ENCODE measurements at regions of chr17 and their contacts with region 1.

Region 1: GRCh38 chr17:57662644-57663308 is 82.3 kb downstream of the CCDC182 start:
- DNase-seq: peak; percentile 97

Region 2: DNA sequence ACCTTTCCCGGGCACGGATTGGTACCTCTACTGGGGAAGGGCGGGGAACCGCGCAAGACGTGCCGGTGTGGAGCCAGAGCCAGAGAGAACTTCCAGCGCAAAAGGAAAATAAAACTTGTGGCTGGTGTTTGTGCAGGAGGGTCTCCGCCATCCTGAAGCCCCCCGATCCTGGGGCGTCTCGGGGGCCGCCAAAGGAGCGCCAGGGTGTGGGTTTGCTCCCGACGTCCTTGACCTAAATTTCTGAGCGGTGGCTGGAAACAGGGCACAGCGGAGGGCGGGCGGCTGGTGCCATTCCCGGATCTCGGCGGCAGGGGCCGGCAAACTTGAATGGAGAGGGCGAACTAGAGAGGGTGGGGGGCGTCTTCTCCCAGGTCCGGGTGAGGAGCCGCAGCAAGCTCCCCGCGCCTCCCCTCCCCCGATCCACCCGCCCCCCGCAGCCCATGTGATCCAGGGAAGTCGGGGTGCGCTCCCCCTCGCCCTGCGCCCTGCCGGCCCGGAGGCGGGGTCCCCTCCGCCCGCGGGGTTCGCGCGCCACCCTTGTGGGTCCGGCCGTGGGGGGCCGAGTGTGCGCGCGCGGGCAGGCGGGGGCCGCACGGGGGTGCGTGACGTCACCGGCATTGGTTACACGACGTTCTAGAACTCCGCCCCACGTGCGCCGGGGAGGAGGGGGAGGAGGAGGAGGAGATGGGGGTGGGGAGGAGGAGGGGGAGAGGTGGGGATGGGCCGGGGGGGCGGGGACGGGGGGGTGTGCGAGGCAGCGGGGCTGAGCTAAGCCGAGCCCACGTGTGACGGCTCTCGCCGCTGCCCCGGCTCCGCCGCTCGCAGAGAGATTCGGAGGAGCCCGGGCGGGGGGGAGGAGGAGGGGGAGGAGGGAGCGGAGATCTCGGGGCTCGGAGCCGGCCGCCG is 406.7 kb before region 1 on chr17 and contains the start of gene MSI2:
- intact Hi-C with region 1: loop called (anchors 5 kb)
- DNase-seq: peak; percentile 94
- total RNA-seq, gene MSI2: 112 TPM

Region 3: DNA sequence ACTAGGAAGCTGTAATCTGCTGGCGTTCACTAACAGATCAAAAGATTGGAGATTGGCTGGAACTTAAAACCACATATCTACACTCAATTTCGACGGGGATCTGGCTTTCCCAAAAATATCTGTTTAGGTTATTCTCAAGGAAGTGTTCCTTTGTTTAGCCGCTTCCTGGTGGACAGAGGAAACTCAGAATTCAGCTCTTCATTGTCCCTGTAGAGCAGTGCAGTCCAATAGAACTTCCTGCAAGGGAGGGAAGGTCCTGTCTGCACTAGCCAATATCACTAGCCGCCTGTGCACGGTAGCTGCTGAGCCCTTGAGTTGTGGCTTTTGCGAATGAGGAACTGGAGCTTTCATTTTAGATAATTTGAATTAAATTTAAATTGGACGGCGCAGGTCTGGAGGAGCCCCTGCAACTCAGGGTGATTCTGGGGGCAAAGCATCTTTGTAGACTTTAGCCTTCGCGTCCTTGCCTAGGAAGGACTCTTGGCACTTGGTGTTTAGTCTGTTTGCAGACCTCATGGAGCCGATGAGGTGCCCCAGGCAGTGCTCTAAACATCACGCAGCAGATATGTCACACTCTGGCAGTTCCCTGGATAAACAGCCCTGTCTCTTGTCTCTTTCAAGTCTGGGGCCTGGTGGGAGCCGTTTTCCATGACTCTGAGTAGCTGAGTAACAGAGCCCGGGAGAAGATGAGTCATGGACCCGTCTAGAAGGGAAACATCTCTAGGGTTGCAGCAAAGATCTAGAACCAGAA is 39.9 kb before region 1 on chr17:
- intact Hi-C with region 1: loop called (anchors 2 kb)
- DNase-seq: no peak

Region 4: DNA sequence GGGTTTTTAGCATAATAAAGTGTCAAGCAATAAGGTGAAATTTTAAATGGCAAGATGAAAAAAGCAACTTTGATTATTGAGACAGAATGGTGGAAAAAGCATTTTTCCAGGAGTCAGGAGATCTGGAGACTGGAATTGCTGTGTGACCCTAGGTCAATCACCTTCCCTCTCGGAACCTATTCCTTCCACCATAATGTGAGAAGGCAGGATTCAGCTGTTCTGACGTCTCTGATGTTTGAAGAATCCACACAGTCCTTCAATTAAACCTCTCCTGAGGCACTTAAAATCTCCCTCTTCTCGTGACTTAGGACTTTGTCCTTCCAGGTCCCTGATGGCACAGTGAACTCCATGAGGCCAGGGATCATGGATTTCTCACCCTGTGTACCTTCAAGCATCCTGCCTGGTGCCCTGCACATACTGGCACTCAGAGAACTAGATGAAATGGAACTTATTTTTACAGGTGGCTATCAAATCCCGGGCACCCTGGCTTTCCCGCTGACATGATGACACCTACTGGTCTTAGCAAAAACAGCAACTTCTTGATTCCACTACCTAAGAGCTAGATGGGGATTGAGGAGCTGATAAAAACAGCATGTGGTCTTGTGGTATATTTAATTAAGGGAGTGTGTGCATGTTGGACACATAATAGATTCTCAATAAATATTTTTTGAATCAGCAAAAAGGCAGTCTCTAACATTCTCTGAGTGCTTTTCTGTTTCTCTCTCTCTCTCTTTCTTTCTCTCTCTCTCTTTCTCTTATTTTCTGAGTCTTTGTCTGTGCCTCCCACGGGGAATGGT is 84.6 kb after region 1 on chr17:
- intact Hi-C with region 1: no loop called
- DNase-seq: no peak

Region 5: GRCh38 chr17:57833179-57833939 is 170.6 kb after region 1 on chr17:
- intact Hi-C with region 1: loop called (anchors 5 kb)
- DNase-seq: peak; percentile 78

Region 6: DNA sequence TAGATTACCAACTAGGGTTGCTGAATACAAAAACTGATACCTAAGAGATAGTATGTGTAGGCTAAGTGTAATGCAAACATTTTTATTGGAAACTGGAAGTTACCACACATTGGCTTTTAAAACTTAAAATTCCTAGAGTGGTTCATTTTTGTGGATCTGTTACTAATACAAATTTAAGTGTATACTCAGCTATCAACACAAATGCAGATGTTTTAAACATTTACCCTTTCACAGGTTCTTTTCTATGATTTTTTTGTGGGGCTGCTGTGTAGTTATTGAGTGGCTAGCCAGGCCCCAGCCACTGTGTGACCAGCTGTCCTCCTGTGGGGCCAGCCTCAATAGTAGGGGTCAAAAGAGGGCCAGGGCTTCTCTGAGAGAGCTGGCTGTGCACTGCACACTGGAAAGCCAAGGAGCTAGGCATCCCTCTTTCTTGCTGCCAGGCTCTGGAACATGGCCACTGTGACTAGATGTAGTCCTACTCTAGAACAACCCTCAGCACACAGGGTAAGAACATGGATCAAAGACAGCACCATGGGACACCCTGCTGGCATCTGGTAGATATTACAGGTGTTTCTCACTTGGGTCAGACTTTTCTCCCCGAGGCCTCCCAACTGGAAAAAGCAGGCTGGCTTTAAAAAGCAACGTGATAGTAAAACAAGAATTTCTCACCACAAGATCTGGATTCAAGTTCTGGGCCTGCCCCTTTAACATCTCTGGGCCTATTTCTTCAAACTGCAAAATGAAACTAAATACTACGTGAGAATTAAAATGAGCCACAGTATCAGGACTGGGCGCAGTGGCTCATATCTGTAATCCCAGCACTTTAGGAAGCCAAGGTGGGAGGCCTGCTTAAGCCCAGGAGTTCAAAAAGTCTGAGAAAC is 332.5 kb after region 1 on chr17:
- intact Hi-C with region 1: loop called (anchors 10 kb)
- DNase-seq: peak; percentile 78